T-cell (primary cell): ENCODE measurements at regions of chr14 and their contacts with region 1.

Region 1: DNA sequence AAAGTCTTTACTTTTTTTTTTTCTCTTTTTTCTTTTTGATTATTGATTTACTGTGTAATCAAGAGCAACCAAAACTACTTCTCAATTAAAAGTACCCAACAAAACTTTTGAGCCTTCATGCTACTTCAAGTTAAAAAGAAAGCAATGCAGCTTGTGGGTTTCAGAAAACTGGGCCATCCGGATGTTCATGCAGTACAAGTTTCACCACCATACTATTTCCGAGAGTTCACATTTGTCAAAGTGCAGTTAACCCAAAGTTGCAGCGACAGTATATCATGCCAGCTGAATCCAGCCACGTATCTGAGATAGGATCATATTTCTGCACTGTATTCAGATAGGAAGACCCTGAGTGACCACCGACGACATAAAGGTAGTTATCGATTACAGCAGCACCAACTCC is 33.0 kb downstream of the KLHL28 start:
- DNase-seq: peak in 1 of 35 experiments; percentile 25
- ATAC-seq: peak in 2 of 4 experiments; percentile 26 to 42
- H3K4me3 ChIP-seq: no peak overlapping the region
- H3K4me3 Mint-ChIP-seq: no peak overlapping the region
- H3K27ac ChIP-seq: no peak overlapping the region
- H3K27ac Mint-ChIP-seq: peak overlapping the region in 1 of 2 donors; percentile 67
- H3K4me1 ChIP-seq: no peaks in the 10 kb centered on the region
- H3K4me1 Mint-ChIP-seq: peaks cover 6 to 27% (median 27%) of the 10 kb centered on the region in 3 donors
- H3K27me3 ChIP-seq: no peaks in the 10 kb centered on the region
- H3K27me3 Mint-ChIP-seq: no peaks in the 10 kb centered on the region

Region 2: GRCh38 chr14:44897045-44897844 is 31.5 kb before region 1 on chr14:
- CTCF ChIA-PET with region 1: no interaction called
- POLR2A ChIA-PET with region 1: no interaction called
- DNase-seq: peak; percentile 83 to 99 (median 98)
- ATAC-seq: peak; percentile 97 to 98 (median 98)
- H3K4me3 ChIP-seq: peak overlapping the region; percentile 71 to 76
- H3K4me3 Mint-ChIP-seq: peak overlapping the region; percentile 80 to 93 (median 90)
- H3K27ac ChIP-seq: peak overlapping the region; percentile 84
- H3K27ac Mint-ChIP-seq: peak overlapping the region; percentile 93 to 94
- H3K4me1 ChIP-seq: peaks cover 0 to 9% of the 10 kb centered on the region in 2 experiments
- H3K4me1 Mint-ChIP-seq: peaks cover 13 to 36% (median 26%) of the 10 kb centered on the region in 3 donors
- H3K27me3 ChIP-seq: no peaks in the 10 kb centered on the region
- H3K27me3 Mint-ChIP-seq: no peaks in the 10 kb centered on the region

Region 3: DNA sequence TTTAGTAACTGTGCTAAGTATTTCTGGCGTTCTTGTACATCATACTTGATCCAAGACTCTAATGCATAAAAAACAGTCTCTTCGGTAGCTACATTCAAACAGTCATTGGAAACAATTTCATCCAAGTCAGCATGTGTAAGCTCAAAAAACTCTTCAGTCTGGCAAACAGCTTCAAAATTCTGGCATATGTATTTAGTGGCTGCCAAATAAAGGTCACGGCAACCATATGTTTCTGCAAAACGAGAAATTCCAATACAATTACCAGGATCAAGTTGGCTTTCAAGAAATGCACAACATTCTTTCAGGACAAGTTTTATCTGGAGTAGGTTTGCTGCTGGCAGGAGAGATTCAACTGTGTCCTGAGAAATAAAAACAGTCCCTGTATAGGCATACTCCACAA is 16.5 kb after region 1 on chr14:
- CTCF ChIA-PET with region 1: interaction called in 1 of 2 experiments, 5 read pairs
- POLR2A ChIA-PET with region 1: interaction called in 1 of 2 experiments, 15 read pairs
- DNase-seq: no peak
- ATAC-seq: no peak
- H3K4me3 ChIP-seq: no peak overlapping the region
- H3K4me3 Mint-ChIP-seq: no peak overlapping the region
- H3K27ac ChIP-seq: no peak overlapping the region
- H3K27ac Mint-ChIP-seq: no peak overlapping the region
- H3K4me1 ChIP-seq: peaks cover 3 to 7% of the 10 kb centered on the region in 2 experiments
- H3K4me1 Mint-ChIP-seq: peaks cover 54 to 71% (median 56%) of the 10 kb centered on the region in 3 donors
- H3K27me3 ChIP-seq: no peaks in the 10 kb centered on the region
- H3K27me3 Mint-ChIP-seq: no peaks in the 10 kb centered on the region

Region 4: DNA sequence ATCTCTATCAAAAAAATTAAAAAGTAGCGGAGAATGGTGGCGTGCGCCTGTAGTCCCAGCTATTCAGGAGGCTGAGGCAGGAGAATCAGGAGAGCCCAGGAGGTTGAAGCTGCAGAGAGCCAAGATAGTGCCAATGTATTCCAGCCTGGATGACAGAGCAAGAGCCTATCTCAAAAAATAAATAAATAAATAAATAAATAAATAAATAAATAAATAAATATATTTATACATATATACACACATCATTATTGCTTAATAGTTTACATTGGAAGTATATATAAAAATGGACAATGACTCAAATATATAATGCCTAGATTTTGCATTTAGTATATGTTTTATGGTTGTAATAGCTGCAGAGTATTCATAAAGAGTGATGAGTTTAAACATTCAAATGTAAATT is 86.3 kb after region 1 on chr14:
- CTCF ChIA-PET with region 1: no interaction called
- POLR2A ChIA-PET with region 1: no interaction called
- DNase-seq: no peak
- ATAC-seq: no peak
- H3K4me3 ChIP-seq: no peak overlapping the region
- H3K4me3 Mint-ChIP-seq: no peak overlapping the region
- H3K27ac ChIP-seq: no peak overlapping the region
- H3K27ac Mint-ChIP-seq: no peak overlapping the region
- H3K4me1 ChIP-seq: no peaks in the 10 kb centered on the region
- H3K4me1 Mint-ChIP-seq: no peaks in the 10 kb centered on the region
- H3K27me3 ChIP-seq: no peaks in the 10 kb centered on the region
- H3K27me3 Mint-ChIP-seq: no peaks in the 10 kb centered on the region